Calu3 (cell line): ENCODE measurements at regions of chr9 and their contacts with region 1.

Region 1: GRCh38 chr9:96331236-96331947 is 29.4 kb upstream of the HSD17B3 start:
- DNase-seq: peak; percentile 17
- H3K4me3 Mint-ChIP-seq: peak overlapping the region; percentile 33
- H3K27ac Mint-ChIP-seq: peak overlapping the region; percentile 87
- H3K4me1 Mint-ChIP-seq: peaks cover 19% of the 10 kb centered on the region
- H3K27me3 Mint-ChIP-seq: no peaks in the 10 kb centered on the region
- CTCF ChIP-seq: no peak

Region 2: GRCh38 chr9:95545831-95546567 is 785.4 kb before region 1 on chr9:
- CTCF ChIA-PET with region 1: no interaction called
- intact Hi-C with region 1: no loop called
- DNase-seq: no peak
- H3K4me3 Mint-ChIP-seq: no peak overlapping the region
- H3K27ac Mint-ChIP-seq: no peak overlapping the region
- H3K4me1 Mint-ChIP-seq: no peaks in the 10 kb centered on the region
- H3K27me3 Mint-ChIP-seq: peaks cover 59% of the 10 kb centered on the region
- CTCF ChIP-seq: no peak

Region 3: GRCh38 chr9:96376891-96377874 is 45.8 kb after region 1 on chr9:
- CTCF ChIA-PET with region 1: no interaction called
- intact Hi-C with region 1: loop called (anchors 5 kb)
- DNase-seq: no peak
- H3K4me3 Mint-ChIP-seq: peak overlapping the region; percentile 7
- H3K27ac Mint-ChIP-seq: peak overlapping the region; percentile 85
- H3K4me1 Mint-ChIP-seq: peaks cover 37% of the 10 kb centered on the region
- H3K27me3 Mint-ChIP-seq: no peaks in the 10 kb centered on the region
- CTCF ChIP-seq: no peak

Region 4: GRCh38 chr9:96418074-96418809 is 86.8 kb after region 1 on chr9 and contains the start of gene ZNF367:
- CTCF ChIA-PET with region 1: interaction called, 3 read pairs
- intact Hi-C with region 1: loop called (anchors 5 kb)
- DNase-seq: peak; percentile 94
- H3K4me3 Mint-ChIP-seq: peak within 1 kb of the TSS; percentile 94
- H3K27ac Mint-ChIP-seq: peak within 1 kb of the TSS; percentile 93
- H3K4me1 Mint-ChIP-seq: peaks cover 19% of the 10 kb centered on the region
- H3K27me3 Mint-ChIP-seq: no peaks in the 10 kb centered on the region
- CTCF ChIP-seq: no peak
- total RNA-seq, gene ZNF367: 8.6 and 9.6 TPM in 2 replicates

Region 5: GRCh38 chr9:96661711-96662110 is 330.3 kb after region 1 on chr9:
- CTCF ChIA-PET with region 1: no interaction called
- intact Hi-C with region 1: loop called (anchors 10 kb)
- DNase-seq: no peak
- H3K4me3 Mint-ChIP-seq: no peak overlapping the region
- H3K27ac Mint-ChIP-seq: no peak overlapping the region
- H3K4me1 Mint-ChIP-seq: peaks cover 11% of the 10 kb centered on the region
- H3K27me3 Mint-ChIP-seq: no peaks in the 10 kb centered on the region
- CTCF ChIP-seq: no peak